ENCODE measurements at regions of chr1 and their contacts with region 1.

Region 1: GRCh38 chr1:107750358-107750959 is 214.5 kb downstream of the VAV3 start:
- DNase-seq: peak; percentile 65
- ATAC-seq: peak; percentile 81
- H3K4me3 ChIP-seq: no peak overlapping the region
- H3K27ac ChIP-seq: no peak overlapping the region
- H3K4me1 ChIP-seq: no peaks in the 10 kb centered on the region
- H3K27me3 ChIP-seq: no peaks in the 10 kb centered on the region
- CTCF ChIP-seq: peak; percentile 79
- EP300 ChIP-seq: no peak
- POLR2A ChIP-seq: no peak
- RAD21 ChIP-seq: peak; percentile 58; the same call in 1 of the 2 replicates

Region 2: DNA sequence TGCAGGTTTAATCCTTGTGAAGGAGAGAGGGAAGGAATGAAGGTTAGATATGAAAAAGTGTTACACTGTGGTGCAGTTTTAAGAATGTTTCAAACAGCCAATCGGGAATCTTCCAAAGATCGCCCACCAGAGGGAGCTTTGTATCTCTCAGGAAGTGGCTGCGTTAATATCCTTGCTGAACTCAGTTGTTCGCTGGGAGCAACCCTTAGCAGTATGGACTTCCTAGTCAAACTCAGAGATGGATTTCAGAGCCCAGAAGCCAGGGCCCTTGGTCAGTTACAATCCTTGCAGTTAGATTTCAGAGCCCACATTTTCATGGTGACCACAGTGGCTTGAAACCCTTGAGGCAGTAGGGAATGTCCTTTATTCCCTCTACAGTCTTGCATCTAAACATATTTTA is 473.4 kb before region 1 on chr1:
- CTCF ChIA-PET with region 1: interaction called, 22 read pairs
- POLR2A ChIA-PET with region 1: no interaction called
- in situ Hi-C with region 1: loop called (anchors 5 kb)
- intact Hi-C with region 1: no loop called
- DNase-seq: peak; percentile 46
- ATAC-seq: peak; percentile 83
- H3K4me3 ChIP-seq: no peak overlapping the region
- H3K27ac ChIP-seq: no peak overlapping the region
- H3K4me1 ChIP-seq: no peaks in the 10 kb centered on the region
- H3K27me3 ChIP-seq: no peaks in the 10 kb centered on the region
- CTCF ChIP-seq: peak; percentile 72
- EP300 ChIP-seq: no peak
- POLR2A ChIP-seq: no peak
- RAD21 ChIP-seq: peak; percentile 42; the same call in 1 of the 2 replicates

Region 3: GRCh38 chr1:107529502-107530149 is 220.8 kb before region 1 on chr1:
- CTCF ChIA-PET with region 1: interaction called, 3 read pairs
- POLR2A ChIA-PET with region 1: no interaction called
- in situ Hi-C with region 1: loop called (anchors 10 kb)
- intact Hi-C with region 1: loop called (anchors 1 kb)
- DNase-seq: peak; percentile 64
- ATAC-seq: peak; percentile 37
- H3K4me3 ChIP-seq: no peak overlapping the region
- H3K27ac ChIP-seq: no peak overlapping the region
- H3K4me1 ChIP-seq: peaks cover 70% of the 10 kb centered on the region
- H3K27me3 ChIP-seq: no peaks in the 10 kb centered on the region
- CTCF ChIP-seq: peak; percentile 89
- EP300 ChIP-seq: no peak
- POLR2A ChIP-seq: no peak
- RAD21 ChIP-seq: peak; percentile 80

Region 4: GRCh38 chr1:107683191-107683657 is 67.2 kb before region 1 on chr1:
- CTCF ChIA-PET with region 1: no interaction called
- POLR2A ChIA-PET with region 1: no interaction called
- in situ Hi-C with region 1: loop called (anchors 10 kb)
- intact Hi-C with region 1: loop called (anchors 5 kb)
- DNase-seq: peak; percentile 92
- ATAC-seq: peak; percentile 87
- H3K4me3 ChIP-seq: peak overlapping the region in 2 of 3 experiments; percentile 5 to 37; a peak in 2 of 6 replicates
- H3K27ac ChIP-seq: peak overlapping the region; percentile 93
- H3K4me1 ChIP-seq: peaks cover 67% of the 10 kb centered on the region
- H3K27me3 ChIP-seq: no peaks in the 10 kb centered on the region
- CTCF ChIP-seq: no peak
- EP300 ChIP-seq: peak in 1 of 2 experiments; percentile 83; a peak in 2 of 4 replicates
- POLR2A ChIP-seq: peak; percentile 62 to 70
- RAD21 ChIP-seq: no peak

Region 5: DNA sequence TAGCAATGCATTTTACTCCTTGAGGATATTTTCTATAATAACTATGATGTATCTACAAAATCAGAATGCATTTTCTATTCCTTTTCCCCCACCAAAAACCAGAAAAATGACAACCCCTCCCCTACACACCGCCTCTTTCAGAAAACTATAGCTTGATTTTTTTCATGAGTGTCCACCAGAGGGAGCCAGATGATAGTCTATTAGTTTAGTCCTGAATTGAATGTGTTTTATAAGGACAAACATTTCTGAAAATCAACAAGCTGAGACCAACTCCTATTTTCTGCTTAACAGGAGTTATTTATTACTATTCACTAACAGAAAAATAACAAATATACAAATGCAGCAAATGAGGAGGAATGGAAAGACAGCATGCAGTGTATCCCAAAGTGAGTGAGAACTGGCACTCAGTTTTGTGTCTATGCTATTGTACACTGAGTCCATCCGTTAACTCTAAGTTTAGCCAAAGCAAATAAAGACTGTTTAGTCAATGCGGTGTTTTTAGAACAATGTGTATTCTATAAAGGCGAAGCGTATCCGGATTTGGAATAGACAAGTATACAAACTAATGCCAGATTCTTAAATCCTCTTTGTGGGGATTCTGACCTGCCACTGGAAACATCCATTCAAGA is 31.9 kb after region 1 on chr1:
- CTCF ChIA-PET with region 1: no interaction called
- POLR2A ChIA-PET with region 1: no interaction called
- in situ Hi-C with region 1: no loop called
- intact Hi-C with region 1: no loop called
- DNase-seq: peak; percentile 43
- ATAC-seq: peak; percentile 52; the same call in 1 of the 3 replicates
- H3K4me3 ChIP-seq: no peak overlapping the region
- H3K27ac ChIP-seq: no peak overlapping the region
- H3K4me1 ChIP-seq: no peaks in the 10 kb centered on the region
- H3K27me3 ChIP-seq: no peaks in the 10 kb centered on the region; a peak in 1 of 5 replicates
- CTCF ChIP-seq: peak; percentile 69
- EP300 ChIP-seq: no peak
- POLR2A ChIP-seq: no peak
- RAD21 ChIP-seq: peak; percentile 48; the same call in 1 of the 2 replicates